Pancreas (tissue), 10 donors: ENCODE measurements at regions of chr16 and their contacts with region 1.

Region 1: DNA sequence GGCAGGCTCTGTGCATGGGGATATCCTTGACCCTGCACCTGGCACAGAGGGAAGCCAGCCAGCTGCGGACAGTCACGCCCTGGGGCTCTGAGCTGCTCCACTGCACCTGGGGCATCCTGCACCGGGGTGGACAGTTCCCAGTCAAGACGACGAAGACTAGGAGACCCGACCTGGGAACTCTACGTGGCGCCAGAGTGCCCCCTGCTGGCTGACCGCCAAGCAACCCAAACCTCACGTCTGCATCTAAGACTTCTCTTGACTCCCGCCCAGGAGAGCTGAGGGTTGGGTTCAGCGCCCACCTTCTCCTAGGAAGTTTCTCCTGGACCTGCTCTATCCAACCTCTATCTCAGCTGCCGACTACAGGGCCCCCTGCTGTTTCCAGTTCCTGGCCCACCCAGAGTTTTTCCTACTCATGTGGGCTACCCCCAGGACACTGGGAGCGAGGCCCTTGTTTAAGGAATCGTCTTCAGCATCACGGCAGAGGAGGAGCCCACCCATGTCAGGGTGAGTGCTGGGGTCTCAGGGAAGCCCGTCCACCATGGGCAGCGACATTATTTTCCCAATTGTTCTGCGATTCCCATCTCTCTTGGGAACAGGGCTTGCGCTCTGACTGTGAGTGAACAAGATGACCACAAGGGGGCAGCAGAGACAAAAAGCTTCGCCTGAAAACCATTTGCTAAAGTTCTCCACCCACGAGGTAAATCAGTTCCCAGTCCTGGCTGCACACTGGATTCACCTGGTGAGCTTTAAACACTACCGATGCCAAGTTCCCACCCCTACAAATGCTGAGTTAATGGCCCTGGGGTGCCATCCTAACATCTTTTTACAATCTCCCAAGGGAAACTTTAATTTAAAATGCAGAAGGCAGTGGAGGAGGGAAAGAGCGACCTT is 29.3 kb downstream of the TLE7 start:
- DNase-seq: peak; percentile 58 to 82 (median 66)
- ATAC-seq: peak; percentile 92 to 98 (median 94)
- H3K4me3 ChIP-seq: no peak overlapping the region
- H3K27ac ChIP-seq: no peak overlapping the region
- H3K4me1 ChIP-seq: peaks cover 0 to 5% (median 5%) of the 10 kb centered on the region in 3 donors
- H3K27me3 ChIP-seq: no peaks in the 10 kb centered on the region
- CTCF ChIP-seq: peak; percentile 89 to 97 (median 92)

Region 2: GRCh38 chr16:71479420-71479819 is 66.9 kb after region 1 on chr16:
- intact Hi-C with region 1: no loop called
- DNase-seq: no peak
- ATAC-seq: peak in 1 of 4 donors; percentile 47
- H3K4me3 ChIP-seq: no peak overlapping the region
- H3K27ac ChIP-seq: no peak overlapping the region
- H3K4me1 ChIP-seq: no peaks in the 10 kb centered on the region
- H3K27me3 ChIP-seq: no peaks in the 10 kb centered on the region
- CTCF ChIP-seq: peak in 1 of 4 donors; percentile 16

Region 3: GRCh38 chr16:71493213-71493612 is 80.7 kb after region 1 on chr16:
- intact Hi-C with region 1: loop called in 2 of 3 experiments (anchors 5 to 10 kb)
- DNase-seq: no peak
- ATAC-seq: no peak
- H3K4me3 ChIP-seq: no peak overlapping the region
- H3K27ac ChIP-seq: no peak overlapping the region
- H3K4me1 ChIP-seq: no peaks in the 10 kb centered on the region
- H3K27me3 ChIP-seq: no peaks in the 10 kb centered on the region
- CTCF ChIP-seq: no peak

Region 4: DNA sequence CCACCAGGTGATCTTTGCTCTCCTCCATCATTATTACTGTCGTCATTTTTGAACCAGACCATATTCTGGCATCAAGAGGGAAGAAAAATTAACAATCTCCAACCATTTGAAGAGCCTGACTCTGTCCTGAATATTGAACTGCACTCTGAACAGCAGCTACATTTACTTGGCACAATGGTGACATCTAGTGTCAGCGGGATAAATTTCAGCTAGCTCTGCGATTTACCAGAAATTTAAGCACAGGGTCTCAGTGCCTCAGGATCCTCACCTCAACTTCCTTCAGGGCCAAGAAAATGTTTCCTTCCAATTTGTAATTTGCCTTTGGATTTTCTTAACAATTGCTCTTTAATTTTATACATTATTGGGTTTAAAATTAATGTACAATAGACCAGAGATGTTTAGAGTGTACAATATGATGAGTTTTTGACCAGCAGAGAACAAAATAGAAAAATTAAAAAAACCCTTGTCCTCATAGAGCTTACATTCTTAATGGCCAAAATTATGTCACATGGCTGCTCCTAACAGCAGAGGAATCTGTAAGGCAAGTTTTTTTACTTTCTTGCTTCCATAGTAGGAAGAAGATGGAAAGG is 87.4 kb after region 1 on chr16:
- intact Hi-C with region 1: loop called in 1 of 3 experiments (anchors 10 kb)
- DNase-seq: peak in 3 of 6 donors; percentile 15 to 58 (median 36)
- ATAC-seq: peak; percentile 64 to 93 (median 88)
- H3K4me3 ChIP-seq: no peak overlapping the region
- H3K27ac ChIP-seq: no peak overlapping the region
- H3K4me1 ChIP-seq: no peaks in the 10 kb centered on the region
- H3K27me3 ChIP-seq: no peaks in the 10 kb centered on the region
- CTCF ChIP-seq: peak; percentile 27 to 64 (median 55)

Region 5: DNA sequence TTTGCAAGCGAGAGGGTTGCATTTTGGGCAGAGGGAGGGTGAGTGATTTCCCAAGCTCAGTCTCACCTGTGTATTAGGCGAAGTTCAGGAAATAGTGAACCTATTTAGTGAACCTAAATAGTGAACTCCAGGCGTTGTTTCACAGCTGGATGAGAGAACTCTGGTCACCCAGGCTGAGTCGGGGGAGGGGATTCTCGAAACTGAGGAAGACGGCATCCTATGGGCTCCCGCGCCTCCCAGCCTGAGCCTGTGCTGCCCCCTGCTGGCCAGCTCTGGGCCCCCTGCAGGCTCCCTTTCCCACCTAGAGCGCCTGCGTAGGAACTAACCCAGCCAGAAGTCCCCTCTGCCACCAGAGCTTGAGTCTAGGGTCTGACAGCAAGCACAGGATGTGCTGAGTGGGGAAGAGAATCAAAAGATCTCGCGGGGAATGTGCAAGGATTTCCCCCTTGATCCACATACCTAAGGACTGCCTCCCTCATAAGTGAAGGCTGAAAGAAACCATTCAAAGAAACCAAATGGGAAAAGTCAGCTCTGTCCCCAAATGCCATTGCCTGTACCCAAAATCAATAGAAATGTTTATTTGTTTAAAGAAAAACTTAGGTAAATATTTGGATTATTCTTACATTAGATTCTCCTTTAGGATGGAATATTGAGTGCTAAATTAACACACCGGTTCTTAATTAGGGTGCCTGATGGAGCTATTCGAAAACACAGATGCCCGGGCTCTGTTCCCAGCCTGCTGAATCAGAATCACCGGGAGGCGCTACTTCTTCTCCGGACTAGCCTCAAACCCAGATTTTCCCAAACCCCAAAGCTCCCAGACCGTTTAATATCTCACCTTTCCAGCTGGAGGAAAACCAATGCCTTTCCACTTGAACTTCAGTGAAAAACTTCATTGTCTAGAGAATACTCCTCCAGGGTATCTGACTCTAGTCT is 198.7 kb after region 1 on chr16:
- intact Hi-C with region 1: loop called in 1 of 3 experiments (anchors 10 kb)
- DNase-seq: peak; percentile 62 to 98 (median 86)
- ATAC-seq: peak; percentile 98 to 100 (median 99)
- H3K4me3 ChIP-seq: no peak overlapping the region
- H3K27ac ChIP-seq: no peak overlapping the region
- H3K4me1 ChIP-seq: no peaks in the 10 kb centered on the region
- H3K27me3 ChIP-seq: no peaks in the 10 kb centered on the region
- CTCF ChIP-seq: peak; percentile 91 to 93 (median 93)